ENCODE measurements at regions of chr18 and their contacts with region 1.

Region 1: GRCh38 chr18:8988261-8988871 is 114.1 kb upstream of the NDUFV2 start:
- DNase-seq: peak; percentile 51 to 86 (median 72)

Region 2: GRCh38 chr18:8654503-8655451 is 333.6 kb before region 1 on chr18:
- intact Hi-C with region 1: loop called (anchors 2 kb)
- DNase-seq: no peak

Region 3: DNA sequence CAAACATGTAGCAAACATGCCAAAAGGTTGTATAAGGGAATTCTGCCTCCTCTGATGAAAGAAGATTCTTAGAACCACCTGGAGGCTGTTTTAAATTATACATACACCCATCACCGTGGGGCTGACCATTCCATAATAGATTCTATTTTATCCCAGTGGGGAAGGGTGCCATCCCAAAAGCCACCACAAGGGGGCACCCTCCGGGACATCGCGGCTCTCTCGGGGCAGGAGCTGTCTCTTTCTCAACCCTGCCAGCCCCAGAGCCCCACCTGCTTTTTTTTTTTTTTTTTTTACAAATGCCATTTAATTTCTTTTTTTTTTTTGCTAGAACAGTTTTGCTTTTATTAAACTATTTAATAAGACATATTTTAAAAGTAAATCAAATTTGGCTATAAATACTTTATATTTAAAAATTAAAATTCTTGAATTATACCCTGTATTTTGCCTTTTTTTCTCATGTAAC is 291.6 kb before region 1 on chr18:
- intact Hi-C with region 1: loop called (anchors 10 kb)
- DNase-seq: peak in 41 of 42 donors; percentile 51 to 93 (median 82)

Region 4: DNA sequence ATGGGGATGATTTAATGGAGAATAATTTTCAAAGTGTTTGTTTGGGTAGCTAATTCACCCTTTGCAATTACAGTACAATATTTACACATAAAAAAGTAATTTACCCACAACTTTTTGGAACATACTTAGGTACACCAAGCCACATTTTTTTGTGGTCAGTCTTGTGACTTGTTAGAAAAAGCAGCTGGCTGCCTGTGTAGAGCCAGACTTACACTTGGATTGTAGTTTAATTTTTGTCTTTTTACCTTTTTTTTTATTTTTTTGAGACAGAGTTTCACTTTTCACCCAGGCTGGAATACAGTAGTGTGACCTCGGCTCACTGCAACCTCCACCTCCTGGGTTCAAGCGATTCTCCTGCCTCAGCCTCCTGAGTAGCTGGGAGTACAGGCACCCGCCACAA is 532.3 kb after region 1 on chr18:
- intact Hi-C with region 1: no loop called
- DNase-seq: no peak